ENCODE measurements at regions of chr11 and their contacts with region 1.

Region 1: DNA sequence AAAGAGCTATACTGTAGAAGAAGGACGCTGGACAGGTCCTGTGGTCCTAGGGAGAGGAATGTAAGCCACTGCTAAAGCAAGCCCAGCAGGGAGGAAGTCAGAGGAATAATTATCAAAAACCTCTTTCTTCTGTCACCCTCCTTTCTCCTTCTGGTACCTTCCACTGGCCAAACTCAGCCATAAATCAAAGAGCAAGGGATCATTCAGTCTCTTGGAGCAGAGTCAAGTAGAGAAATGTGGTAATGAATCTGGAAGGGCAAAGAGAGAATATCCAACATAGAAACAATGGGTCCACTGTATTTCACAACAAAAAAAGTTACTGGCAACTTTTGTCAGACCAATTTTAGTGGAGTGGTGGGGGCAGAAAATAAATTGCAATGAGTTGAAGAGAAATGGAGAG is 33.5 kb upstream of the ANGPTL5 start:
- DNase-seq: no peak
- H3K4me3 ChIP-seq: no peak overlapping the region
- H3K27ac ChIP-seq: no peak overlapping the region
- H3K4me1 ChIP-seq: no peaks in the 10 kb centered on the region
- H3K27me3 ChIP-seq: no peaks in the 10 kb centered on the region
- CTCF ChIP-seq: no peak
- POLR2A ChIP-seq: no peak

Region 2: GRCh38 chr11:103433386-103434380 is 1483.8 kb after region 1 on chr11:
- intact Hi-C with region 1: loop called (anchors 10 kb)
- DNase-seq: no peak
- H3K4me3 ChIP-seq: no peak overlapping the region
- H3K27ac ChIP-seq: no peak overlapping the region
- H3K4me1 ChIP-seq: no peaks in the 10 kb centered on the region
- H3K27me3 ChIP-seq: no peaks in the 10 kb centered on the region
- CTCF ChIP-seq: no peak
- POLR2A ChIP-seq: no peak